ENCODE measurements at regions of chr9 and their contacts with region 1.

Region 1: GRCh38 chr9:34332076-34332964 is 3.0 kb downstream of the NUDT2 start:
- DNase-seq: no peak
- H3K4me3 ChIP-seq: no peak overlapping the region
- H3K27ac ChIP-seq: no peak overlapping the region
- H3K27me3 ChIP-seq: no peaks in the 10 kb centered on the region
- CTCF ChIP-seq: peak; percentile 58

Region 2: DNA sequence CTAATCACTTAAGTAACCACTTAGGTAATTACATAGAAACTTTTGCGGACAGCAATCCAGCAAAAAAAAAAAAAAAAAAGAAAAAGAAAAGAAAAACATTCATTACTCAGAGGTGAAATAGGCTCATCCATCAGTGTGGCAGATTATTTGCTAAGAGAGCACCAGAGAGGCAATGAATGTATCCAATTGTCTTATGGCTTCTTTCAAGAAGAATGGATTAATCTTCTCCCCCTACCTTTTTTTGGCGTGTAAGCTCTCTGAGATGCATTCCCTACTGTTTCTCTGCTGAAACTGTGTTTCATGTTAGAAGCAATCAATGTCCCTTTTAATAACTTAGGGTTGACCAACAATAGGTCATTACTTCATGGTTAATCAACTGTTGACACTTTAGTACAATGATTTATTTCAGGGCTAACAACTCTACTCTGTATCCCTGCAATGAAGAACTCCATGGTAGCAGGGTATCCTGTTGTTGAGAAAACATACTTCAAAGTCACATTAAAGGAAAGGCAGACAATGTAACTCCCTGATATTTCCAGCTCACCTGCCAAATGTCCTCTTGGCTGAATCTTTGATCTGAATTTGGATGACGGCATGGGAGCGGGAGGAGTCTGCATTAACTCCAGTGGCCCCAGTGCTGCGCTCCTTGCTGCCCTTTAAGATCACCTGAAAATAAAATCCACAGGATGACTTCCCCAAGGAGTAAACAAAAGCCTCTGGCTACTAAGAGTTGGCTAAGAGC is 60.9 kb before region 1 on chr9:
- CTCF ChIA-PET with region 1: no interaction called
- POLR2A ChIA-PET with region 1: no interaction called
- DNase-seq: no peak
- H3K4me3 ChIP-seq: no peak overlapping the region
- H3K27ac ChIP-seq: no peak overlapping the region
- H3K27me3 ChIP-seq: no peaks in the 10 kb centered on the region
- CTCF ChIP-seq: no peak

Region 3: DNA sequence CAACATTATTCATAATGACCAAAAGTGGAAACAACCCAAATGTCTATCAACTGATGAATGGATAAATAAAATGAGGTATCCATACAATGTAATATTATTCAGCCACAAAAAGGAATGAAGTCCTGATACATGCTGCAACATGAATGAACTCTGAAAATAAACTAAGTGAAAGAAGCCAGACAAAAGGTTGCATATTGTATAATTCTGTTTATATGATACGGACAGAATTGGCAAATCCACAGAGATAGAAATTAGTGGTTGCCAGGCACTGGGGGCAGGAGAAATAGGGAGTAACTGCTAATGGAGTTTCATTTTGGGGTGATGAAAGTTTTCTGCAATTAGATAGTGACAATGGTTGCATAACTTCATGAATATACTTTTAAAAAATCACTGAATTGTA is 50.2 kb before region 1 on chr9:
- CTCF ChIA-PET with region 1: no interaction called
- POLR2A ChIA-PET with region 1: no interaction called
- DNase-seq: no peak
- H3K4me3 ChIP-seq: no peak overlapping the region
- H3K27ac ChIP-seq: no peak overlapping the region
- H3K27me3 ChIP-seq: no peaks in the 10 kb centered on the region
- CTCF ChIP-seq: no peak

Region 4: DNA sequence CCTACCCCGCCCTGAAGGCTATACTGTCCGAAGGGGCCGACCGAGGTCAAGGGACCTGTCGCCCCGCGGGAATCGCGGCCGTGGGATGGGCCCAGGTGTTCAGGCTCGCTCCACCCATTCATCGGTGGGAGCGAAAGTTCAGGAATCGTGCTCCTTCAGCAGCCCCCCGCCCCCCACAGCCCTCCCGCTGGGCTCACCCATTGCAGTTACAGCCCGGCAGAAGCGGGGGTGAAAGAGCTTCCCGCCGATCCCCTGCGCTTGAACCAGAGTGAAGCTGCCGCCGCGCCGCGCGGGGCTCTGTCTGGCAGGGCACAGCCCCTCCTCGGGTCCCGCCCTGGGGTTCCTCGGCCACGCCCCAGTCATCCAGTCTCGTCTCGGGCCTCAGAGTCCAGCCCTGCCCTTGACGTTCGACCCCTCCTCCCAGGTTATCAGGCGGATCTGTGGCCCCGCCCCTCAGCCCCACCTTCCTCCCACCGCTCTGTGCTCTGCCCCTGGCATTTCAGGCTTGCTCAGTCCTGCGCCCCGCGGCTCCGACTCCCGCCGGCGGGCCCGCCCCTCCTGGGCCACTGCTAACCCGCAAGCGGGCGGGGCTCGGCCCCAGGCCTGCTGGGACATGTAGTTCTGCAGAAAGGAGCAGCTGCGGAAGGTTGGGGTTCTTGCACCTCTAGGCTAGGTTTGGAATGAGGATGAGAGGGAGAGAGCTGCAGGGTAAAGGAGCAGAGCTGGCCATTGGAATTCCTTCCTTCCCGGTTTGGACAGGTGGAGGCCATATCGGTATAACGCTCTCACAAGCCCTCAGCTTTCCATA is 44.5 kb after region 1 on chr9 and contains the start of gene MYORG:
- CTCF ChIA-PET with region 1: interaction called, 59 read pairs
- POLR2A ChIA-PET with region 1: no interaction called
- DNase-seq: peak; percentile 27
- H3K4me3 ChIP-seq: peak within 1 kb of the TSS; percentile 75
- H3K27ac ChIP-seq: no peak within 1 kb of the TSS
- H3K27me3 ChIP-seq: peaks cover 28% of the 10 kb centered on the region
- CTCF ChIP-seq: no peak
- polyA plus RNA-seq, gene MYORG: 0.19 and 0.22 TPM in 2 replicates

Measured in AG04450 (cell line).